Adrenal gland (tissue), 19 donors: ENCODE measurements at regions of chr9 and their contacts with region 1.

Region 1: DNA sequence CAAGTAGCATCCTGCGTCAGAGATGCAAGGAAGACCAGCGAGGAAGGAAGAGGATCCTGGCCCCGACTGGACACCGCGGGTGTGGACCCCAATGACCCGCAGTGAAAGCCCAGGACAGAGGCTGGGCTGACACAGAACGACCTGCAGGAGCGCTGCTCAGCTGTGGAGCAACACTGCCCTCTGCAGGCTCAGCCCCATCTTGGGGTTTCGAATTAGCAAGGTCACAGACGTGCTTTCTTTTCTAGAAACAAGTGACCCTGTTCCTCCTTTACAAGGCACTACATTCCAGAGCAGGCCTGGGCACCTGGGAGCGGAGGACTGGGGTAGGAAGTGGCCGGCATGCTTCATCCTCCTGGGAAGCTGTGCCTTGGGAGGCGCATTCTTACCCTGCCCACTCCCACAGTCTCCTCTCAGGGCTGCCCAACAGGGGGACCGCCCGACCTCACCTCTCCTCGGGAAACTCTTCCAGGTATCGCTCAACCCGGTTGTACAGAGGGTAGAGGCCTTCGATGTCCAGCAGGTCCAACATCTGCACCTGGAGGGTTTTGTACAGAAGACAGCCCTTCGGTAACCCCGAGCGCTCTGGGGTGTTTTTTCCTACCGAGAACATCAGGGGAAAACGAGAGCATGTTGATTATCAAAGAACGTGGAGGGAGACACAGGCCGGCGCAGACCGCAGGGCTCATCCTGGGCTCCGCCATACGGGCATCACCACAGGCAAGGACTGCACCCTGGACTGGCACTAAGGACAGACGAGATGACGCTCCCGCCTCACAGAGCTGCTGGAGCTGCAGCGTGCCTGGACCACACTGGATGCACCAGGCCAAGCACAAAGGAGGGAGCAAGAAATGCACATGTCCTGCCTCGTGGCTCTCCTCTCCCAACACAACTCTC is 35.0 kb downstream of the IPPK start:
- DNase-seq: peak; percentile 82 to 94 (median 87)
- H3K4me3 ChIP-seq: peak overlapping the region in 1 of 4 donors; percentile 6
- H3K27ac ChIP-seq: peak overlapping the region in 2 of 5 donors; percentile 32 to 55
- H3K4me1 ChIP-seq: peaks cover 0 to 7% of the 10 kb centered on the region in 2 donors
- H3K27me3 ChIP-seq: no peaks in the 10 kb centered on the region
- CTCF ChIP-seq: peak; percentile 94 to 98 (median 98)
- POLR2A ChIP-seq: no peak

Region 2: GRCh38 chr9:92140074-92140753 is 494.7 kb before region 1 on chr9:
- intact Hi-C with region 1: loop called in 1 of 2 experiments (anchors 5 kb)
- DNase-seq: peak; percentile 76 to 96 (median 87)
- H3K4me3 ChIP-seq: peak overlapping the region in 1 of 4 donors; percentile 71
- H3K27ac ChIP-seq: peak overlapping the region in 1 of 5 donors; percentile 15
- H3K4me1 ChIP-seq: peaks cover 13 to 15% of the 10 kb centered on the region in 2 donors
- H3K27me3 ChIP-seq: no peaks in the 10 kb centered on the region
- CTCF ChIP-seq: peak; percentile 81 to 98 (median 92)
- POLR2A ChIP-seq: no peak

Region 3: GRCh38 chr9:92342825-92343488 is 292.0 kb before region 1 on chr9:
- intact Hi-C with region 1: loop called (anchors 10 kb)
- DNase-seq: no peak
- H3K4me3 ChIP-seq: no peak overlapping the region
- H3K27ac ChIP-seq: no peak overlapping the region
- H3K4me1 ChIP-seq: no peaks in the 10 kb centered on the region
- H3K27me3 ChIP-seq: no peaks in the 10 kb centered on the region
- CTCF ChIP-seq: peak in 3 of 6 experiments; percentile 11 to 49 (median 39)
- POLR2A ChIP-seq: no peak

Region 4: DNA sequence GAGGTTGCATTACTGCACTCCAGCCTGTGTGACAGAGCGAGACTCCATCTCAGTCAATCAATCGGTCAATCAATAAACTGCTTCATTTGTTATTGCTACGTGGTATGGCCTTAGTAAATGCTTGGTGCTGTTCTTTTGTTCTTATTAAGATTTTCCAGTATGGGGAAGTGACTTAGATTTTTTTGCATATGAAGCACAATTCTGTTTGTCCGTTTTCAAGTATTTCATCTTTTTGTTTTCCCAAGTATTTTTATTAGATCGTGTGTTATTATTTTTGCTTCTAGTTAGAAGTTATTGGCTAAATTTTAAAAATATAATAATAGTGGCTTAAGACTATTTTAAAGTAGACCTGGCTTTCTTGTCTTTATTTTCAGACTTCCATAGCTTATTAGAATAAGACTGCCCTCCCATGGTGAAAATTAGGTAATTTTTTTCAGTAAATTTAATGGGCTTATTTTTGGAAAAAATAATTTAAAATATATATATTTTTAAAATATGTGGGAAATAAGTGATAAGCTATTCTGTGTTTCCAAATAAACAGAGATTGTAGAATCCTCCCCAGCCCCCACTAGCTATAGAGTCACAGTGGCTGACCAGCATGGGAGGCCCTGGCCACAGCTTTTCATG is 195.9 kb before region 1 on chr9:
- intact Hi-C with region 1: loop called in 1 of 2 experiments (anchors 10 kb)
- DNase-seq: no peak
- H3K4me3 ChIP-seq: no peak overlapping the region
- H3K27ac ChIP-seq: no peak overlapping the region
- H3K4me1 ChIP-seq: no peaks in the 10 kb centered on the region
- H3K27me3 ChIP-seq: no peaks in the 10 kb centered on the region
- CTCF ChIP-seq: peak in 5 of 6 experiments; percentile 5 to 56 (median 36)
- POLR2A ChIP-seq: no peak

Region 5: GRCh38 chr9:92895812-92896436 is 261.0 kb after region 1 on chr9:
- intact Hi-C with region 1: no loop called
- DNase-seq: no peak
- H3K4me3 ChIP-seq: no peak overlapping the region
- H3K27ac ChIP-seq: no peak overlapping the region
- H3K4me1 ChIP-seq: no peaks in the 10 kb centered on the region
- H3K27me3 ChIP-seq: no peaks in the 10 kb centered on the region
- CTCF ChIP-seq: no peak
- POLR2A ChIP-seq: no peak